HepG2 (cell line): ENCODE measurements at regions of chr14 and their contacts with region 1.

Region 1: GRCh38 chr14:50937325-50937724 is 7.0 kb downstream of the PYGL start:
- DNase-seq: no peak
- ATAC-seq: no peak
- H3K4me3 ChIP-seq: no peak overlapping the region
- H3K27ac ChIP-seq: peak overlapping the region; percentile 76
- H3K4me1 ChIP-seq: peaks cover 81% of the 10 kb centered on the region
- H3K27me3 ChIP-seq: no peaks in the 10 kb centered on the region
- CTCF ChIP-seq: no peak
- EP300 ChIP-seq: no peak
- POLR2A ChIP-seq: no peak
- RAD21 ChIP-seq: no peak

Region 2: GRCh38 chr14:50830932-50831725 is 106.2 kb before region 1 on chr14 and contains the start of gene NIN:
- CTCF ChIA-PET with region 1: no interaction called
- POLR2A ChIA-PET with region 1: interaction called, 3 read pairs
- in situ Hi-C with region 1: no loop called
- intact Hi-C with region 1: loop called (anchors 5 kb)
- DNase-seq: peak; percentile 33
- ATAC-seq: peak; percentile 89
- H3K4me3 ChIP-seq: peak within 1 kb of the TSS; percentile 77 to 86 (median 77)
- H3K27ac ChIP-seq: no peak within 1 kb of the TSS
- H3K4me1 ChIP-seq: peaks cover 83% of the 10 kb centered on the region
- H3K27me3 ChIP-seq: peaks cover 0 to 17% of the 10 kb centered on the region in 2 experiments; a peak in 1 of 5 replicates
- CTCF ChIP-seq: no peak
- EP300 ChIP-seq: no peak
- POLR2A ChIP-seq: no peak
- RAD21 ChIP-seq: peak; percentile 38; the same call in 1 of the 2 replicates
- total RNA-seq, gene NIN: 9.7 and 11.6 TPM in 2 replicates

Region 3: GRCh38 chr14:50875359-50876070 is 61.8 kb before region 1 on chr14:
- CTCF ChIA-PET with region 1: no interaction called
- POLR2A ChIA-PET with region 1: interaction called, 7 read pairs
- in situ Hi-C with region 1: no loop called
- intact Hi-C with region 1: loop called (anchors 1 kb)
- DNase-seq: peak; percentile 96
- ATAC-seq: peak; percentile 97
- H3K4me3 ChIP-seq: peak overlapping the region in 2 of 3 experiments; percentile 34 to 59; a peak in 4 of 6 replicates
- H3K27ac ChIP-seq: peak overlapping the region; percentile 69
- H3K4me1 ChIP-seq: peaks cover 74% of the 10 kb centered on the region
- H3K27me3 ChIP-seq: no peaks in the 10 kb centered on the region
- CTCF ChIP-seq: no peak
- EP300 ChIP-seq: peak; percentile 57 to 90; a peak in 3 of 4 replicates
- POLR2A ChIP-seq: no peak
- RAD21 ChIP-seq: no peak

Region 4: DNA sequence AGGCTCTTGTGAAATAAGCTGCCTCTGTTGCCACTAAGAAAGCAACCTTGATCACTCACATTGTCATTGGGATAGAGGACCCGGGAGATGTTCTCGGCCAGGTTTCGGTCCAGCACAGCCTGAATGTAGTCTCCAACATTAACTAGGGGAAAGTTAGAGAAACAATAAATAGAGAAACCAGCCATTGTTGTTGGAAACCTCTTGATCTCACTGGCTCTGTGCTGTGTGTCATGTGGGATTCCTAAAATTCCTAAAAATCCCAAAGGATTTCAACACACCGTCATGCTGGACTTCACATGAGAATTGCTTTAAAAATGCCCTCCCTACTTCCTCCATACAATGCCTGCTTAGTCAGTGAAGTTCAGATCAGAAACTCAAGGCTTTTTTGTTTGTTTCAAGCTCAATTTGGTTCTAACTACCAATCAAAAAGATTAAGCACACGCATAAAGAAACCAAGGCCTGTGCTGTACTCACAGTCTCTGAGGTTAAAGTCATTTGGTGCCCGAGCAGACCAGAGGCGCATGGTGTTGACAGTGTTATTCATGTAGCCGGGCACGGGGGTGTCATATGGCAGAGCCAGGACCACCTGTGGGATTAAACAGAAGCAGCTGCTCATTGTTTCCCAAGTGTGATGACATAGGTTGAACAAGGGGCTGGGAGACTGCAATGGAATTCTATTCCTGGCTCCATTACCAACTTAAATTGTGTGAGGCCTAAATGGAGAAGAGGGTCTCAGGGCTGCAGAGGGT is 16.7 kb before region 1 on chr14:
- CTCF ChIA-PET with region 1: no interaction called
- POLR2A ChIA-PET with region 1: interaction called, 3 read pairs
- in situ Hi-C with region 1: no loop called
- intact Hi-C with region 1: loop called (anchors 2 kb)
- DNase-seq: peak; percentile 90
- ATAC-seq: peak; percentile 89
- H3K4me3 ChIP-seq: peak overlapping the region in 1 of 3 experiments; percentile 6; a peak in 1 of 6 replicates
- H3K27ac ChIP-seq: peak overlapping the region; percentile 66
- H3K4me1 ChIP-seq: peaks cover 46% of the 10 kb centered on the region
- H3K27me3 ChIP-seq: no peaks in the 10 kb centered on the region
- CTCF ChIP-seq: no peak
- EP300 ChIP-seq: peak in 1 of 2 experiments; percentile 60; a peak in 2 of 4 replicates
- POLR2A ChIP-seq: no peak
- RAD21 ChIP-seq: no peak

Region 5: GRCh38 chr14:51069055-51069664 is 131.8 kb after region 1 on chr14:
- CTCF ChIA-PET with region 1: no interaction called
- POLR2A ChIA-PET with region 1: no interaction called
- in situ Hi-C with region 1: no loop called
- intact Hi-C with region 1: no loop called
- DNase-seq: no peak
- ATAC-seq: no peak
- H3K4me3 ChIP-seq: no peak overlapping the region
- H3K27ac ChIP-seq: no peak overlapping the region
- H3K4me1 ChIP-seq: no peaks in the 10 kb centered on the region
- H3K27me3 ChIP-seq: no peaks in the 10 kb centered on the region; a peak in 1 of 5 replicates
- CTCF ChIP-seq: no peak
- EP300 ChIP-seq: no peak
- POLR2A ChIP-seq: no peak
- RAD21 ChIP-seq: no peak